ENCODE measurements at regions of chr13 and their contacts with region 1.

Region 1: DNA sequence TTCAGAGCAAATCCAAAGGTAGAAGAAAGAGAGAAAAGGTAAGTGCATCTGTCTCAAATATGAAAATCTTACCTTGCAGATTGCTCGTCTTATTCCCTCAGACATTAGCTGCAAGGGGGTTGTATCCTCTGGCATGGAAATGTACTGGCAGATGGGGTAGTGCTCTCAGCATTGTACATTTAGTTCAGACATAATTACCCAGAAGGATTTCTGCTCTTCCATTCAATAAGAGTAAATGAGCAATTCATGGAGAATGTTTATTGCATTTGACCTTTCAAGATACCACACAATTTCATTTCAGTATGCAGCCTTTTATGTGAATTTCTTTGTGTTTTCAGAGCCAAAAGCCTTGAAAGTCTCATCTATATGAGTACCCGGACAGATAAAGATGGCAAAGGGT is 63.8 kb downstream of the SCEL start:
- DNase-seq: peak; percentile 27
- H3K4me3 ChIP-seq: no peak overlapping the region
- H3K27ac ChIP-seq: no peak overlapping the region
- H3K4me1 ChIP-seq: peaks cover 22% of the 10 kb centered on the region
- H3K27me3 ChIP-seq: no peaks in the 10 kb centered on the region
- CTCF ChIP-seq: no peak

Region 2: GRCh38 chr13:76129305-76130000 is 1469.9 kb before region 1 on chr13:
- CTCF ChIA-PET with region 1: no interaction called
- POLR2A ChIA-PET with region 1: no interaction called
- intact Hi-C with region 1: no loop called
- DNase-seq: no peak
- H3K4me3 ChIP-seq: no peak overlapping the region
- H3K27ac ChIP-seq: no peak overlapping the region
- H3K4me1 ChIP-seq: no peaks in the 10 kb centered on the region
- H3K27me3 ChIP-seq: no peaks in the 10 kb centered on the region
- CTCF ChIP-seq: no peak

Region 3: GRCh38 chr13:76822698-76823267 is 776.6 kb before region 1 on chr13:
- CTCF ChIA-PET with region 1: no interaction called
- POLR2A ChIA-PET with region 1: no interaction called
- intact Hi-C with region 1: no loop called
- DNase-seq: peak; percentile 38
- H3K4me3 ChIP-seq: no peak overlapping the region
- H3K27ac ChIP-seq: no peak overlapping the region
- H3K4me1 ChIP-seq: no peaks in the 10 kb centered on the region
- H3K27me3 ChIP-seq: no peaks in the 10 kb centered on the region
- CTCF ChIP-seq: peak; percentile 29; the same call in 1 of the 2 replicates

Region 4: GRCh38 chr13:77397636-77398035 is 201.7 kb before region 1 on chr13:
- CTCF ChIA-PET with region 1: no interaction called
- POLR2A ChIA-PET with region 1: no interaction called
- intact Hi-C with region 1: no loop called
- DNase-seq: no peak
- H3K4me3 ChIP-seq: no peak overlapping the region
- H3K27ac ChIP-seq: no peak overlapping the region
- H3K4me1 ChIP-seq: peaks cover 8% of the 10 kb centered on the region
- H3K27me3 ChIP-seq: no peaks in the 10 kb centered on the region
- CTCF ChIP-seq: no peak

Region 5: GRCh38 chr13:77429320-77430142 is 169.8 kb before region 1 on chr13:
- CTCF ChIA-PET with region 1: no interaction called
- POLR2A ChIA-PET with region 1: no interaction called
- intact Hi-C with region 1: no loop called
- DNase-seq: no peak
- H3K4me3 ChIP-seq: no peak overlapping the region
- H3K27ac ChIP-seq: no peak overlapping the region
- H3K4me1 ChIP-seq: no peaks in the 10 kb centered on the region
- H3K27me3 ChIP-seq: no peaks in the 10 kb centered on the region
- CTCF ChIP-seq: no peak

Region 6: DNA sequence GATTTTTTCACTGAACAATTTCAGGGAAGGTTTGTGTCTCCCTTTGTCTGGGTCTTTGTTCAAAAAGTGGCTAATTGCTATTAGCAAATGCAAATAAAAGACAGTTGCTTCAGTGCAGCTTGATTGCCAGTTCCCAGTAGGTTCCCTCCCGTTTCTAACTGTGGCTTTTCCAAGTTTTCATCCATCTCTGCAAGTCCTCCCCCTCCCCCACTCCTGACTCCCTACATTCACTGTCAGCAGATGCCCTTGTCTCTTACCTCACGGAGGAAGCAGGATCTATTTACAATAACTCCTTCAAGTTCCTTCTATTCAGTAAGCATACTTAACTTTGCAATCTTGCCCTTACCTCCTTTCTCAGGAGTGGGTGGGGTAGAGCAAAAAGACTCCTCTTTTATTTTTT is 119.3 kb before region 1 on chr13:
- CTCF ChIA-PET with region 1: interaction called, 12 read pairs
- POLR2A ChIA-PET with region 1: no interaction called
- intact Hi-C with region 1: no loop called
- DNase-seq: peak; percentile 8
- H3K4me3 ChIP-seq: no peak overlapping the region
- H3K27ac ChIP-seq: no peak overlapping the region
- H3K4me1 ChIP-seq: peaks cover 6% of the 10 kb centered on the region
- H3K27me3 ChIP-seq: peaks cover 2% of the 10 kb centered on the region
- CTCF ChIP-seq: no peak

Region 7: GRCh38 chr13:77751513-77752456 is 152.4 kb after region 1 on chr13:
- CTCF ChIA-PET with region 1: no interaction called
- POLR2A ChIA-PET with region 1: no interaction called
- intact Hi-C with region 1: loop called (anchors 2 kb)
- DNase-seq: peak; percentile 86
- H3K4me3 ChIP-seq: peak overlapping the region; percentile 5
- H3K27ac ChIP-seq: peak overlapping the region; percentile 84
- H3K4me1 ChIP-seq: peaks cover 64% of the 10 kb centered on the region
- H3K27me3 ChIP-seq: no peaks in the 10 kb centered on the region
- CTCF ChIP-seq: peak; percentile 86

Region 8: DNA sequence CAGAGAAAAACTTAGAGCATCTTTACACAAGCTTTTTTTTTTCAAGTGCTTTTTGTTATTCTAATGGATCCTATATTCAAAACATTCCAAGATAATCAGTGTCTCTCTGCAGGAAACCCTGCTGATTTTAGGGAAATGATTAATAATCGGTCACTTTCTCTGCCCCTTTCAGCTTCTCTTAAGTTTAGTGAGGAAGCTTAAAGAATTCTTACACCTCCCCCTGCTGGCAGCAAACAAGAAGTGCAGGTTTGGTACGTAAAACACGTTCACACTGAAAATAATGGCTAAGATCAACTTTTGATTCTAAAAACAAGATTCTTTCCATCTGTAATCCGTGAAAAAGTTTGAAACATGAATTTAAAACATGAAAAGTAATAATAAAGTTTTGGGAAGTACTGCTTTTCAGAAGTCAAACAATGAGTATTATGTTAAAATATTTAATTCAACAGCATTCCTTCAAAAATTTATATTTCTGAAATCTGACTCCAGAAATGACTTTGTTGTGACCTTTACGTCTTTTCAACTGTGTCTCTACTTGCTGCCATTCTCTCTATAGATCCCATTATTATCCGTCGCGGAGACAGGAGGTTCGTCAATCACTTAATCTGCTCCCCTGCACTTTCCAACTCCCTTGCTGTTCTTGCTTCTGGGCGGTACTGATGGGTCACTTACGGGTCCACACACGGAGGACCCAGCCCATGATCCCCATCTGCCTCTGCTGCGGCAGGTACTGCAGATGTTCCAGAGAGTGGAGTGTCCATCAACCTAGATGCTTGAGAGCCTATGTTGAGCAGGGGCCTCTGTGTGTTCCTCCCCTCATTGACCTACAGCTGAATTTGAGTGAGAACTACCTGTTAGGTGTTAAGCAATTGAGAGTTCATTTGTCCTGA is 522.4 kb after region 1 on chr13:
- CTCF ChIA-PET with region 1: no interaction called
- POLR2A ChIA-PET with region 1: no interaction called
- intact Hi-C with region 1: loop called (anchors 10 kb)
- DNase-seq: peak; percentile 84
- H3K4me3 ChIP-seq: no peak overlapping the region
- H3K27ac ChIP-seq: no peak overlapping the region
- H3K4me1 ChIP-seq: no peaks in the 10 kb centered on the region
- H3K27me3 ChIP-seq: no peaks in the 10 kb centered on the region
- CTCF ChIP-seq: peak; percentile 91

Measured in A673 (cell line).